ENCODE measurements at regions of chr10 and their contacts with region 1.

Region 1: DNA sequence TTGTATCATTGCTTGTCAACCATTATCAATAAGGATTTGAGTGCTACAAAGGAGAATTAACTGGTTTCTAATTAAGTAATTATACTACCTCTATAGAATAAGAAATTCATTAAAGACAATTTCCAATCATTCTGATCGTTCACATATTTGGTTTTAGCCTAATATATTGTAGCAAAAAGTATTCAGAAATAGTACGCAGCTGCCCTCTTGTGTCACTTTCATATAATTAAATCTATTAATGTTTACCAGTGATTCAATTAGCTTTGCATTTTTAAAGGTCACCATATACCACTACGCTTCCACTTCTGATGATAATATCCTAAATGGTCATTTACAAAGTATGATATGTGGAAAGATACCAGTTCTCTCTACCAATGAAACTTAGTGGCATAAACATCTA is 128.3 kb downstream of the NEBL start:
- DNase-seq: no peak
- ATAC-seq: no peak
- H3K4me3 ChIP-seq: no peak overlapping the region
- H3K27ac ChIP-seq: no peak overlapping the region
- H3K4me1 ChIP-seq: no peaks in the 10 kb centered on the region
- H3K27me3 ChIP-seq: no peaks in the 10 kb centered on the region
- CTCF ChIP-seq: peak in 1 of 3 experiments; percentile 22; a peak in 1 of 6 replicates
- POLR2A ChIP-seq: no peak
- RAD21 ChIP-seq: peak; percentile 40; the same call in 1 of the 2 replicates

Region 2: GRCh38 chr10:19819419-19820033 is 949.3 kb before region 1 on chr10:
- CTCF ChIA-PET with region 1: interaction called, 4 read pairs
- POLR2A ChIA-PET with region 1: no interaction called
- RAD21 ChIA-PET with region 1: no interaction called
- intact Hi-C with region 1: loop called (anchors 10 kb)
- DNase-seq: no peak
- ATAC-seq: no peak
- H3K4me3 ChIP-seq: no peak overlapping the region
- H3K27ac ChIP-seq: no peak overlapping the region
- H3K4me1 ChIP-seq: no peaks in the 10 kb centered on the region
- H3K27me3 ChIP-seq: no peaks in the 10 kb centered on the region
- CTCF ChIP-seq: peak in 2 of 3 experiments; percentile 42 to 60; a peak in 4 of 6 replicates
- POLR2A ChIP-seq: no peak
- RAD21 ChIP-seq: peak; percentile 20; the same call in 1 of the 2 replicates